ENCODE measurements at regions of chr10 and their contacts with region 1.

Region 1: DNA sequence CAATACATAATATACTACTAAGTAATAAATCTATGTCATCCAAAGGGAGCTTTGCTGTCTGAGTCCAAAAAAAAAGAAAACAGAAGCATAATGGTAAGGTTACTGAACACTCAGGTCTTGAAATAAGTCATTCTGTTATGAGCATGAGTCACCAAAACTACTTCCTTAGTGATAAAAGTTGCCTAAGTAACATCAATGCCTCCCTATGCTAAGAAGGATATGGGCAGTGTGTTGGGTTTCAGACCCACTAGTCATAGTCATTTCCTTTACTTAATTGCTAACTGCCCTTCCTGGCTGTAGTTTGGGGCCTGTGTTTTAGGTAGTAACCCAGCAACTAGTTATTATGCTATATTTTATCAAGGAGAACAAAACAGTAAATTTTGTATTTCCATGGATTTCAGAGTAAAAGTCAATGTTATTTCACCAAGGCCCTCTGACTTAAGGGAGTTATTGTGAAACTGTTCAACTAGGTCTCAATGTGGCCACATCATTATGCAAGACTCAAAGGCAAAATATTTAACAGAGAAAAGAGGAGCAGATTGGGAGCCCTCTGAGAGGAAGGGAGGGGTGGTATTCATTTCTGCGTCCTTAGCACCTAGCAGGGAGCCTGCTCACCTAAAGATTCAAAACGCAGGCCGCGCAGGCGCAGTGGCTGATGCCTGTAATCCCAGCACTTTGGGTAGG is 11.7 kb upstream of the VIM start:
- DNase-seq: peak; percentile 43
- H3K4me3 Mint-ChIP-seq: no peak overlapping the region
- H3K27ac Mint-ChIP-seq: peak overlapping the region; percentile 94
- H3K4me1 Mint-ChIP-seq: peaks cover 43% of the 10 kb centered on the region
- H3K27me3 Mint-ChIP-seq: no peaks in the 10 kb centered on the region

Region 2: GRCh38 chr10:17200912-17201793 is 15.2 kb before region 1 on chr10 and contains the start of gene TRDMT1:
- intact Hi-C with region 1: loop called (anchors 1 kb)
- DNase-seq: peak; percentile 77
- H3K4me3 Mint-ChIP-seq: peak within 1 kb of the TSS; percentile 96
- H3K27ac Mint-ChIP-seq: peak within 1 kb of the TSS; percentile 77
- H3K4me1 Mint-ChIP-seq: peaks cover 49% of the 10 kb centered on the region
- H3K27me3 Mint-ChIP-seq: peaks cover 7% of the 10 kb centered on the region
- total RNA-seq, gene TRDMT1: 3.2 and 4.2 TPM in 2 replicates

Region 3: GRCh38 chr10:17206210-17206709 is 10.1 kb before region 1 on chr10:
- intact Hi-C with region 1: loop called (anchors 1 kb)
- DNase-seq: no peak
- H3K4me3 Mint-ChIP-seq: peak overlapping the region; percentile 49
- H3K27ac Mint-ChIP-seq: peak overlapping the region; percentile 90
- H3K4me1 Mint-ChIP-seq: peaks cover 53% of the 10 kb centered on the region
- H3K27me3 Mint-ChIP-seq: no peaks in the 10 kb centered on the region

Region 4: DNA sequence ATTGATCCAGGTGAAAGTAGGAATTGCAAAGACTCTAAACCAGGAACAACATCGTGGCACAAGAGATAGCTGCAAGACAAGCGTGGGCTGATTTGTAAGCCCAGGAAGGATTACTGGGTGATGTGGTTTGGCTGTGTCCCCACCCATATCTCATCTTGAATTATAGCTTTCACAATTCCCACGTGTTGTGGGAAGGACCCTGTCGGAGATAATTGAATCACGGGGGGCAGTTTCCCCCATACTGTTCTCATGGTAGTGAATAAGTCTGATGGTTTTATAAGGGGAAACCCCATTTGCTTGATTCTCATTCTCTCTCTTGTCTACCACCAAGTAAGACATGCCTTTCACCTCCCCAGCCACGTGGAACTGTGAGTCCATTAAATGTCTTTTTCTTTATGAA is 178.5 kb after region 1 on chr10:
- intact Hi-C with region 1: no loop called
- DNase-seq: no peak
- H3K4me3 Mint-ChIP-seq: no peak overlapping the region
- H3K27ac Mint-ChIP-seq: no peak overlapping the region
- H3K4me1 Mint-ChIP-seq: no peaks in the 10 kb centered on the region
- H3K27me3 Mint-ChIP-seq: peaks cover 5% of the 10 kb centered on the region

Region 5: DNA sequence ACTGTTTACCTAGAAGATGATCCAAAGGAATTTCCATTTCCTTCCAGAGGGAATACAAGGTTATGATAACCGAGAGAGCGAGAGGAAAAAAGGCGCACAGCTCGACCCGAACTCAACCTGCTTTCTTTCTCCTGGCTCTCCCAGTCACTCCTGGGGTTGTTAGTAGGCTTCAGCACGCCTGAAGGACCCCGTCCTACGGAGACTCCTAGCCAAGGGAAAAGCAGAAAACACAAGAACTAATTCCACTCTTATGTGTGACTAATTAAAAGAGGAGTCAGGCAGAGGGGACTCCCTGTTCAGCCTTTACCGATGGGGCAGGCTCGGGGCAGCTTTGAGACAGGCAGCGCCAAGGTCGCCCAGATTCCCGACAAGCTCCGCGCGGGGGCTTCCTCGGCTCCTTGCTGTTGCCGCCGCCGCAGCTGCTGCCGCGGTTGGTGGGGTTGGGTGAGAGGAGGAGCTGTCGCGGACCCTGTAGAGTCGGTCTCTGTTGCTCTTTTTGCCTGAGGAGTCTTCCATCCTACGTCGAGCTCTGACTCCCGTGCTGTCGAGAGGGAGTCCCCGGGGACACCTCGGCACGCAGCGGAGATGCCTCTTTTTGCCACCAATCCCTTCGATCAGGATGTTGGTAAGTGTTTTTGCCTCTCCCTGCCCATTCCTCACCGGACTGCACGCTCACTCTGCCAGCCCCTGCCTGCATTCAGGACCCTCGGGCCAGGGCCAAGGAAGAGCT is 427.6 kb after region 1 on chr10 and contains the start of gene STAM:
- intact Hi-C with region 1: no loop called
- DNase-seq: peak; percentile 87
- H3K4me3 Mint-ChIP-seq: peak within 1 kb of the TSS; percentile 98
- H3K27ac Mint-ChIP-seq: peak within 1 kb of the TSS; percentile 99
- H3K4me1 Mint-ChIP-seq: peaks cover 44% of the 10 kb centered on the region
- H3K27me3 Mint-ChIP-seq: no peaks in the 10 kb centered on the region
- total RNA-seq, gene STAM: 33.8 and 35.2 TPM in 2 replicates

Measured in activated T-helper 2 cell treated with anti-CD3 and anti-CD28 coated beads, Interferon-gamma antibody, Interleukin-2, Interleukin-4, amounts not matched to agents 10 μg/mL and 5 μg/mL and 100 μg/mL, durations not matched to agents 14 hours and 24 hours and 36 hours (primary cell).